MCF 10A (cell line): ENCODE measurements at regions of chr5 and their contacts with region 1.

Region 1: DNA sequence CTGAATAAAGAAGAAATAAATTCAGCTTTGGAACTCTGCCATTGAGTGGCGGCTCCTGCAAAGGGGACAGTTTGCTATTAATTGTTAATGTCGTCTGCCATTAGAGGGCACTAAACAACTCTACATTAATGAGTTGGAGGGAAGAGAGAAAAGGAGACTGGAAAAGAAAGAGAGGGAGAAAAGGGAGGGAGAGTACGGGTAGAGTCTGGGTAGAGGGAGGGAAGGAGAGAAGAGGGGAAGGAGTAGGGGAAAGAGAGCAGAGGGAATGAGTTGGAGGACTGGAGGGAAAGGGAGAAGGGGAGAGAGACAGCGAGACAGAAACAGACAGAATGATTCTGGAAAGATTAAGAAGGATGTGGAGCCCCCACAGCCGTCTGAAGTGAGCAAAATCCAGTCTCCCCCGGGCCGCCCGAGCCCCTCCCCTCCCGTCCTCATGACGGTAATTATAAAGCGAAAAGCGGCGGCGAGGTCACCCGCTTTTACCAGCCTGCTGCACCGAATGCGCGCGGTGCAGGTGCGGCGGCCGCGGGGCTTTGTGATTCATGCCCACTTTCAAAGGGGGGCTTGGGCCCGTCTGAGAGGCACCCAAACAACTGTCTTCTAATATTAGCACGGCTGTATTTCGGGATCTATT is 1.9 kb upstream of the FST start:
- DNase-seq: peak; percentile 69
- H3K4me3 Mint-ChIP-seq: peak overlapping the region; percentile 79
- H3K27ac Mint-ChIP-seq: no peak overlapping the region
- H3K4me1 Mint-ChIP-seq: peaks cover 23% of the 10 kb centered on the region
- H3K27me3 Mint-ChIP-seq: no peaks in the 10 kb centered on the region
- CTCF ChIP-seq: peak; percentile 60

Region 2: DNA sequence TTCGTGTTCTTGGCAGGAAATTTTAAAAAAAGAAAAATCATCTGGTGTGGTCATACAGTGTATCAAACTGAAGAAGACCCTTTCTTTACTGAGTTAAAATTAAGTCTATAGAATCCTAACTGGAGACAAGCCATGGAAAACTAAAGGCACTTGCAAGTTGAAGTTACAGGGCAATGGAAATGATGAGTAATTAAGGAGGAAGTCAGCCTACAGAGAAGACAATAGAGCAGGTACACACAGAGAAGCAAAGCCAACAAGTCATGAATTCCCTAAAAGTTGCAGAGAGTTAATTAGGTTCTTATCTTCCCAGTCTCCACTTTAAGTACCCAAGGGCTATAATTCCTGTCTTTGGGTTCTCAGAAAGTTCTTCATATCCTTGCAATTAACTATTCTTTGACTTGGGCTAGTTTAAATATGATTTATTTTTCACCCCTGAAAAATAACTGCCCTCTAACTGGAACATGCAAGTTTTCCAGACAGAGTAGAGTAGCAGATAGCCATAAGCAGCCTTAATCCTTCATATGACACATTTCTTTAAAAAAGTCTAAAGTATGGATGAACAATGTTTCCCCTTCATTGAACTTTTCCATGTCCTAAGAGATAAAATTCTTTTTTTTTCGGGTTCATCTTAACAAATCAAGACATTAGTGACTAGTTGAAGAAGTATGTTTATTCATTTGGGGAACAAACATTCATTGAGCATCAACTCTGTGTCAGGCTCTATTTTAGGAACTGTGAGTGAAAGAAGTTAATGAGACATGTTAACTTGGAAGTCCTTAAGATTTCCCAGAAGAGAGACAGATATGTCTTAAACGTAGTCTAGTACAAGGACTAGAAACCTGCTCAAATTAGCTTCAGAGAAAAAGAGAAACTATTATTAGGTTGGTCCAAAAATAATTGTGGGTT is 494.5 kb before region 1 on chr5:
- CTCF ChIA-PET with region 1: no interaction called
- POLR2A ChIA-PET with region 1: no interaction called
- intact Hi-C with region 1: no loop called
- DNase-seq: no peak
- H3K4me3 Mint-ChIP-seq: no peak overlapping the region
- H3K27ac Mint-ChIP-seq: peak overlapping the region; percentile 25
- H3K4me1 Mint-ChIP-seq: peaks cover 28% of the 10 kb centered on the region
- H3K27me3 Mint-ChIP-seq: no peaks in the 10 kb centered on the region
- CTCF ChIP-seq: no peak

Region 3: GRCh38 chr5:53170748-53171349 is 307.7 kb before region 1 on chr5:
- CTCF ChIA-PET with region 1: interaction called, 5 read pairs
- POLR2A ChIA-PET with region 1: no interaction called
- intact Hi-C with region 1: loop called (anchors 2 kb)
- DNase-seq: peak; percentile 63
- H3K4me3 Mint-ChIP-seq: no peak overlapping the region
- H3K27ac Mint-ChIP-seq: no peak overlapping the region
- H3K4me1 Mint-ChIP-seq: peaks cover 5% of the 10 kb centered on the region
- H3K27me3 Mint-ChIP-seq: no peaks in the 10 kb centered on the region
- CTCF ChIP-seq: peak; percentile 77

Region 4: GRCh38 chr5:53874409-53874808 is 395.9 kb after region 1 on chr5:
- CTCF ChIA-PET with region 1: no interaction called
- POLR2A ChIA-PET with region 1: no interaction called
- intact Hi-C with region 1: loop called (anchors 2 kb)
- DNase-seq: peak; percentile 43
- H3K4me3 Mint-ChIP-seq: no peak overlapping the region
- H3K27ac Mint-ChIP-seq: no peak overlapping the region
- H3K4me1 Mint-ChIP-seq: no peaks in the 10 kb centered on the region
- H3K27me3 Mint-ChIP-seq: no peaks in the 10 kb centered on the region
- CTCF ChIP-seq: no peak

Region 5: GRCh38 chr5:54062958-54063357 is 584.4 kb after region 1 on chr5:
- CTCF ChIA-PET with region 1: no interaction called
- POLR2A ChIA-PET with region 1: no interaction called
- intact Hi-C with region 1: loop called (anchors 10 kb)
- DNase-seq: no peak
- H3K4me3 Mint-ChIP-seq: no peak overlapping the region
- H3K27ac Mint-ChIP-seq: no peak overlapping the region
- H3K4me1 Mint-ChIP-seq: no peaks in the 10 kb centered on the region
- H3K27me3 Mint-ChIP-seq: no peaks in the 10 kb centered on the region
- CTCF ChIP-seq: no peak

Region 6: GRCh38 chr5:54229041-54229780 is 750.7 kb after region 1 on chr5:
- CTCF ChIA-PET with region 1: interaction called, 7 read pairs
- POLR2A ChIA-PET with region 1: no interaction called
- intact Hi-C with region 1: loop called (anchors 1 kb)
- DNase-seq: peak; percentile 67
- H3K4me3 Mint-ChIP-seq: no peak overlapping the region
- H3K27ac Mint-ChIP-seq: no peak overlapping the region
- H3K4me1 Mint-ChIP-seq: peaks cover 6% of the 10 kb centered on the region
- H3K27me3 Mint-ChIP-seq: no peaks in the 10 kb centered on the region
- CTCF ChIP-seq: peak; percentile 74